Ascending aorta (tissue), 2 donors: ENCODE measurements at regions of chr6 and their contacts with region 1.

Region 1: DNA sequence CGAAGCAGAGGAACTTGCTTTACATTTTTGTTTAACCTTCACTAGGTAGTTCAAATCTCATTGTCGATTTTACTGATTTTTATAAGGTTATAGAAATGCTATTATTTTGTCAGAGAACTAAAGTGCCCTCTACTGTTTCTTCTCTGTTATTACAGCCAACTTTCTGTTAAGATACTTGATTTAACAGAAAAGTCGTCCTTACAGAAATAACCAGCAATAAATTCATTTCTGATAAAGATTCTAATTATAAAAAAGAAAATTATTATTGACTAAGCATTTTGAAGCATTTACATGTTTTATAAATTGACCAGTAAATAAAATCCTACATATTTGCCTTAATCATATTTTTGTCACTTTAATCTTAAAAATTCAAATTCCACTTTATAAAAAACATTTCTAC is 60.8 kb downstream of the OGFRL1 start:
- DNase-seq: no peak
- H3K4me3 ChIP-seq: no peak overlapping the region
- H3K27ac ChIP-seq: peak overlapping the region; percentile 6 to 70
- H3K4me1 ChIP-seq: peaks cover 0 to 11% of the 10 kb centered on the region in 2 donors
- H3K27me3 ChIP-seq: no peaks in the 10 kb centered on the region
- CTCF ChIP-seq: peak; percentile 34 to 73 (median 67)

Region 2: GRCh38 chr6:70413114-70413991 is 936.0 kb before region 1 on chr6 and contains the start of gene FAM135A:
- intact Hi-C with region 1: loop called (anchors 10 kb)
- DNase-seq: peak; percentile 92 to 99
- H3K4me3 ChIP-seq: peak within 1 kb of the TSS; percentile 67 to 95
- H3K27ac ChIP-seq: peak within 1 kb of the TSS; percentile 89 to 94
- H3K4me1 ChIP-seq: peaks cover 0 to 5% of the 10 kb centered on the region in 2 donors
- H3K27me3 ChIP-seq: no peaks in the 10 kb centered on the region
- CTCF ChIP-seq: no peak
- total RNA-seq, gene FAM135A: 10.7 TPM

Region 3: GRCh38 chr6:70706491-70707123 is 642.8 kb before region 1 on chr6:
- intact Hi-C with region 1: loop called (anchors 10 kb)
- DNase-seq: no peak
- H3K4me3 ChIP-seq: no peak overlapping the region
- H3K27ac ChIP-seq: no peak overlapping the region
- H3K4me1 ChIP-seq: no peaks in the 10 kb centered on the region
- H3K27me3 ChIP-seq: no peaks in the 10 kb centered on the region
- CTCF ChIP-seq: peak; percentile 6 to 68 (median 50)

Region 4: GRCh38 chr6:71190809-71191208 is 158.6 kb before region 1 on chr6:
- intact Hi-C with region 1: loop called (anchors 5 kb)
- DNase-seq: no peak
- H3K4me3 ChIP-seq: no peak overlapping the region
- H3K27ac ChIP-seq: no peak overlapping the region
- H3K4me1 ChIP-seq: no peaks in the 10 kb centered on the region
- H3K27me3 ChIP-seq: no peaks in the 10 kb centered on the region
- CTCF ChIP-seq: peak in 1 of 3 experiments; percentile 28

Region 5: GRCh38 chr6:71250099-71250606 is 99.2 kb before region 1 on chr6:
- intact Hi-C with region 1: loop called (anchors 5 kb)
- DNase-seq: no peak
- H3K4me3 ChIP-seq: no peak overlapping the region
- H3K27ac ChIP-seq: peak overlapping the region; percentile 48 to 82
- H3K4me1 ChIP-seq: peaks cover 0 to 7% of the 10 kb centered on the region in 2 donors
- H3K27me3 ChIP-seq: no peaks in the 10 kb centered on the region
- CTCF ChIP-seq: no peak

Region 6: DNA sequence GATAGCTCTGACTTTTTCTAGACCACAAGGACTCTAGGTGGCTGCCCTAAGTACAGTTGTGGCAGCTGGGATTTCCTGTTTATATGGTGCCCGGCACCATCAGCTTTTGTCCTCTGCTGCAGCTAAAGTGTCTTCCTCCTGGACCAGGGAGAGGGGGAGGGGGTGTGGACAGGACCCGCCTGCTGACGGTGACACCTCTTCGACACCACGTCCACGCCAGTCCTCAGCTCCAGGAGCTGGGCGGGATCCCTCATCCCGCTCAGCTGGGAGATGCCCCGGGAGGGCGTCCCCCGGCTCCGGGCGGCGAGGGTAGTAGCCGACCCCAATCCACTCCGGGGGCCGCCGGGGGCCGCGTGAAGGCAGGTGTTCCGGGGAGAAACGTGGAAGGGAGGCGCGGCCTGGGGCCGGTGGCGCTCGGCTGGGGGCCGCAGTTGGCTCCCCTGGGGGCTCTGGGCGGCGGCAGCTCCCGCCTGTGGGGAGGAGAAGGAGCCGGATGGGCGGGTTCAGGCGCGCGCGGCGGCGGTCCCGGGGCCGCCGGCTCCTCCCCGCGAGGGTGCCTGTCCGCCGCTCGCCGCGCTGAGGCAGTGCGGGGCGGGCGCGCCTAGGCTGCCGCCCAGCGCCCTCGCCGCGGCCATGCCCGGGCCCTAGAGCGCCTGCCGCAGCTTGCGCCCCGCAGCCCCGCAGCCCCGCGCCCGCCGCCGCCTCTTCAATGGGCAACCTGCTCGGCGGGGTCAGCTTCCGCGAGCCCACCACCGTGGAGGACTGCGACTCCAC is 61.0 kb before region 1 on chr6 and contains the start of gene OGFRL1:
- intact Hi-C with region 1: loop called (anchors 2 kb)
- DNase-seq: peak; percentile 33 to 84
- H3K4me3 ChIP-seq: peak within 1 kb of the TSS; percentile 96 to 99
- H3K27ac ChIP-seq: peak within 1 kb of the TSS; percentile 95 to 98
- H3K4me1 ChIP-seq: peaks cover 0 to 13% of the 10 kb centered on the region in 2 donors
- H3K27me3 ChIP-seq: no peaks in the 10 kb centered on the region
- CTCF ChIP-seq: peak in 1 of 3 experiments; percentile 37
- total RNA-seq, gene OGFRL1: 14.6 TPM